Heart right ventricle (tissue), 16 donors: ENCODE measurements at regions of chr13 and their contacts with region 1.

Region 1: GRCh38 chr13:61954092-61954491 is 538.4 kb upstream of the PCDH20 start:
- DNase-seq: no peak
- ATAC-seq: no peak
- H3K4me3 ChIP-seq: no peak overlapping the region
- H3K27ac ChIP-seq: no peak overlapping the region
- H3K4me1 ChIP-seq: no peaks in the 10 kb centered on the region
- H3K27me3 ChIP-seq: no peaks in the 10 kb centered on the region
- CTCF ChIP-seq: peak in 7 of 9 donors; percentile 11 to 54 (median 31)

Region 2: DNA sequence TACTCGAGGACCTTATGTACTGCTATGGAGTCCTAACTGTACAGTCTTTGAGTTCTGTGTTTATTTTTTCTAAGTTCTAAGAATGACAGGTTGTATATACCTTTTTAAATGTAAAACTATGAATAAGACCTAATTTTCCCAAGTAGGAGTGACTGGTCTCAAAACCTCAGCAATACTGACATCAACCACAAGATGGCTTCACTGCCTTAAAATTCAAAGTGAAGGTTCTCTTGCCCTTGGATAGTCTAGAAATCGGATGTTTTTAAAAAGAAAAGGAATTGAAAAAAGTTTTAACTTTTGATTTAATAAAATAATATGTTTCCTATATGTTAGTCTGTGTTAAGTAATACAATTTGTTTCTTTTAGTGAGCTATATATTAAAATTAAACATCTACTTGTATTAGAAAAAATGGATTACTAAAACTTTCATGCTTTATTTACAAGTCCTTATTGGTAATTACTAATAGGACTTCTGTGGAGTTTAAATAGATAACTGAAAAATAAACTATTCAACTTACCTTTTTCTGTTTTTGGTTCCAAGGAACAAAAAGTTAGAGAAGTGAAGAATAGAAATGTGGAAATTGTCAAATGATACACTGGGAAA is 1505.1 kb before region 1 on chr13:
- intact Hi-C with region 1: loop called in 1 of 10 experiments (anchors 10 kb)
- DNase-seq: peak in 1 of 2 donors; percentile 24
- ATAC-seq: peak in 1 of 8 donors; percentile 37
- H3K4me3 ChIP-seq: no peak overlapping the region
- H3K27ac ChIP-seq: no peak overlapping the region
- H3K4me1 ChIP-seq: peaks cover 0 to 4% (median 0%) of the 10 kb centered on the region in 9 donors
- H3K27me3 ChIP-seq: no peaks in the 10 kb centered on the region
- CTCF ChIP-seq: peak; percentile 47 to 79 (median 74)

Region 3: DNA sequence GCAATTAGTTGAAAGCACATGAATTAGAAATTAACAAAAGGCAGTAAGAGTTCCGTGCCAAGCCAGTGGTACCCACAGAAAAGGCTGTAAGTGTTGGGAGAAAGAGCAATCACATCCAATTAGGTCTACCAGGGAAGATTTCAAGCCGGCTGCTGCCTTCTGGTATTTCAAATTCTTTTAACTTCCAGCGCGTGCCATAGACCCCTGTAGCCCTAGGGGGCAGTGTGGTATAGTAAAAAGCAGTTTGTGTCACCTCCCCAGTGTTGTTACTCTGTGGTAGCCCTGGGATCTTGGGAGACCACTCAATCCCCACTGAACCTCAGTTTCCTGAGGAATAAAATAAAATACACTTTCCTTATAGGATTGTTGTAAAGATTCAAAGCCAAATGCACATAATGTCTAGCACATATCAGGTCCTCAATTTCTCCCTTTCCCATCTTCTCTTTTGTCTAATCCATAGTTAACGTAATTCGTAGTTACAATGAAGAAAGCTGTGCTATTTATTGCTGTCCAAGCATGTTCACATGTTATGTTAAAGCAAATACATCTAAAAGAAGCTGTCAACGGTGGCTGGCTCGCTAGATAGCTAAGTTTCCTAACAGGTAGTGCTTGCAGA is 1326.9 kb before region 1 on chr13:
- intact Hi-C with region 1: loop called in 1 of 10 experiments (anchors 5 kb)
- DNase-seq: peak in 1 of 2 donors; percentile 6
- ATAC-seq: peak in 1 of 8 donors; percentile 62
- H3K4me3 ChIP-seq: no peak overlapping the region
- H3K27ac ChIP-seq: no peak overlapping the region
- H3K4me1 ChIP-seq: no peaks in the 10 kb centered on the region
- H3K27me3 ChIP-seq: peaks cover 0 to 18% (median 0%) of the 10 kb centered on the region in 7 donors
- CTCF ChIP-seq: peak in 8 of 9 donors; percentile 9 to 61 (median 54)

Region 4: GRCh38 chr13:61830475-61830874 is 123.6 kb before region 1 on chr13:
- intact Hi-C with region 1: no loop called
- DNase-seq: no peak
- ATAC-seq: no peak
- H3K4me3 ChIP-seq: no peak overlapping the region
- H3K27ac ChIP-seq: no peak overlapping the region
- H3K4me1 ChIP-seq: no peaks in the 10 kb centered on the region
- H3K27me3 ChIP-seq: no peaks in the 10 kb centered on the region
- CTCF ChIP-seq: no peak

Region 5: GRCh38 chr13:62003452-62003851 is 49.4 kb after region 1 on chr13:
- intact Hi-C with region 1: no loop called
- DNase-seq: no peak
- ATAC-seq: no peak
- H3K4me3 ChIP-seq: no peak overlapping the region
- H3K27ac ChIP-seq: no peak overlapping the region
- H3K4me1 ChIP-seq: no peaks in the 10 kb centered on the region
- H3K27me3 ChIP-seq: no peaks in the 10 kb centered on the region
- CTCF ChIP-seq: no peak

Region 6: DNA sequence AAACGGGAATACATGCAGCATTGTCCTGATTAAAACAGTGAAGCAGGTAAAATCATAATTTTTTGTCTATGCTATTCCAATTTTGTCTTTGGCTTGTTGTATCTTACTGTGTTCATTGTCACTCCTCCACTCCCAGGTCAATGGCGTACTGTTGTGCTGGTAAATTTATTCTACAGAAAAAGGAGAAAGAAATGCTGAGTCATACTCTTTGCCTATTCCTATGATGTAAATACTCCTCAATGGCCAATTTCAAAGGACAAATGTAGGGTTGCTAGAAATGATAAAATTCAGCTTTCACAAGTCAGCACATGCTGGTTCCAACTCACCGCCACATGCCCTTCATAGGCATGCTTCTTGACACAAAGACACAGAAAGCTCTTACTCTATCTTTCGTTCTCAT is 156.0 kb after region 1 on chr13:
- intact Hi-C with region 1: no loop called
- DNase-seq: no peak
- ATAC-seq: no peak
- H3K4me3 ChIP-seq: no peak overlapping the region
- H3K27ac ChIP-seq: no peak overlapping the region
- H3K4me1 ChIP-seq: no peaks in the 10 kb centered on the region
- H3K27me3 ChIP-seq: no peaks in the 10 kb centered on the region
- CTCF ChIP-seq: no peak